ENCODE measurements at regions of chr10 and their contacts with region 1.

Region 1: DNA sequence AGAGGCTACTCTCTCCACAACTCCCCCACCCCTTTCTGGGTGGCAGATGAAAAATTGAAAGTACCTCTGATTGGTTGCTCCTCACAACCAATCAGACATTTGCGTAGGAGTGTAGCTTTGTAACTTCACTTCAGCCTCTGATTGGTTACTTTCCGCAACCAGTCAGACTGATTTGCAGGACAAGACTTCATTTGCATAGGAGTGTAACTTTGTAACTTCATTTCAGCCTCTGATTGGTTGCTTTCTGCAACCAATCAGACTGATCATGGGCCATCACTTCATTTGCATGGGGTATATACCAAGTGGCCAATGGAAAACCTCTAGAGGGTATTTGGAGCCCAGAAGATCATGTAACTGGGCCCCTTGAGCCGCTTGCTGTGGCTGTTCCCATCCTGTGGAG is 25.6 kb downstream of the CDNF start:
- DNase-seq: no peak
- H3K4me3 ChIP-seq: no peak overlapping the region
- H3K27ac ChIP-seq: no peak overlapping the region
- H3K4me1 ChIP-seq: no peaks in the 10 kb centered on the region
- H3K27me3 ChIP-seq: no peaks in the 10 kb centered on the region
- CTCF ChIP-seq: no peak
- EP300 ChIP-seq: no peak
- POLR2A ChIP-seq: no peak

Region 2: GRCh38 chr10:14491806-14492205 is 320.5 kb before region 1 on chr10:
- intact Hi-C with region 1: loop called in 1 of 4 experiments (anchors 10 kb)
- DNase-seq: no peak
- H3K4me3 ChIP-seq: no peak overlapping the region
- H3K27ac ChIP-seq: no peak overlapping the region
- H3K4me1 ChIP-seq: peaks cover 9% of the 10 kb centered on the region
- H3K27me3 ChIP-seq: no peaks in the 10 kb centered on the region
- CTCF ChIP-seq: no peak
- EP300 ChIP-seq: no peak
- POLR2A ChIP-seq: no peak

Region 3: GRCh38 chr10:14742815-14743214 is 69.5 kb before region 1 on chr10:
- intact Hi-C with region 1: no loop called
- DNase-seq: no peak
- H3K4me3 ChIP-seq: no peak overlapping the region
- H3K27ac ChIP-seq: no peak overlapping the region
- H3K4me1 ChIP-seq: no peaks in the 10 kb centered on the region
- H3K27me3 ChIP-seq: no peaks in the 10 kb centered on the region
- CTCF ChIP-seq: no peak
- EP300 ChIP-seq: no peak
- POLR2A ChIP-seq: no peak

Measured in ovary (tissue), 10 donors.